Common myeloid progenitor, CD34-positive (primary cell): ENCODE measurements at regions of chr7 and their contacts with region 1.

Region 1: DNA sequence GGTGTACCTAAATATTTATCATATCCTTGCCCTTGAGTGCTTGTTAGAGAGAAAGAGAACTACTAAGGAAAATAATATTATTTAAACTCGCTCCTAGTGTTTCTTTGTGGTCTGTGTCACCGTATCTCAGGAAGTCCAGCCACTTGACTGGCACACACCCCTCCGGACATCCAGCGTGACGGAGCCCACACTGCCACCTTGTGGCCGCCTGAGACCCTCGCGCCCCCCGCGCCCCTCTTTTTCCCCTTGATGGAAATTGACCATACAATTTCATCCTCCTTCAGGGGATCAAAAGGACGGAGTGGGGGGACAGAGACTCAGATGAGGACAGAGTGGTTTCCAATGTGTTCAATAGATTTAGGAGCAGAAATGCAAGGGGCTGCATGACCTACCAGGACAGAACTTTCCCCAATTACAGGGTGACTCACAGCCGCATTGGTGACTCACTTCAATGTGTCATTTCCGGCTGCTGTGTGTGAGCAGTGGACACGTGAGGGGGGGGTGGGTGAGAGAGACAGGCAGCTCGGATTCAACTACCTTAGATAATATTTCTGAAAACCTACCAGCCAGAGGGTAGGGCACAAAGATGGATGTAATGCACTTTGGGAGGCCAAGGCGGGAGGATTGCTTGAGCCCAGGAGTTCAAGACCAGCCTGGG is 11.4 kb downstream of the SERPINE1 start:
- DNase-seq: peak; percentile 98 to 99 (median 99)
- H3K4me3 ChIP-seq: peak overlapping the region in 4 of 7 experiments; percentile 26 to 69 (median 55)
- H3K27ac ChIP-seq: peak overlapping the region; percentile 61 to 84
- H3K4me1 ChIP-seq: peaks cover 0 to 44% (median 21%) of the 10 kb centered on the region in 4 experiments
- H3K27me3 ChIP-seq: peaks cover 0 to 15% (median 2%) of the 10 kb centered on the region in 5 experiments

Region 2: GRCh38 chr7:101128040-101128794 is 10.1 kb before region 1 on chr7:
- CTCF ChIA-PET with region 1: interaction called, 10 read pairs
- POLR2A ChIA-PET with region 1: interaction called, 6 read pairs
- DNase-seq: no peak
- H3K4me3 ChIP-seq: peak overlapping the region in 2 of 7 experiments; percentile 15 to 80
- H3K27ac ChIP-seq: no peak overlapping the region
- H3K4me1 ChIP-seq: peaks cover 0 to 52% (median 39%) of the 10 kb centered on the region in 4 experiments
- H3K27me3 ChIP-seq: peaks cover 0 to 6% (median 1%) of the 10 kb centered on the region in 5 experiments

Region 3: GRCh38 chr7:101169838-101170551 is 31.7 kb after region 1 on chr7:
- CTCF ChIA-PET with region 1: interaction called, 19 read pairs
- POLR2A ChIA-PET with region 1: no interaction called
- DNase-seq: peak; percentile 69 to 87 (median 85)
- H3K4me3 ChIP-seq: no peak overlapping the region
- H3K27ac ChIP-seq: no peak overlapping the region
- H3K4me1 ChIP-seq: peaks cover 0 to 62% (median 47%) of the 10 kb centered on the region in 4 experiments
- H3K27me3 ChIP-seq: peaks cover 5 to 99% (median 63%) of the 10 kb centered on the region in 5 experiments

Region 4: GRCh38 chr7:101244375-101245146 is 106.2 kb after region 1 on chr7 and contains the start of gene FIS1:
- CTCF ChIA-PET with region 1: interaction called, 17 read pairs
- POLR2A ChIA-PET with region 1: no interaction called
- DNase-seq: peak; percentile 89 to 94 (median 92)
- H3K4me3 ChIP-seq: peak within 1 kb of the TSS; percentile 79 to 97 (median 92)
- H3K27ac ChIP-seq: peak within 1 kb of the TSS; percentile 79 to 90
- H3K4me1 ChIP-seq: peaks cover 0 to 52% (median 46%) of the 10 kb centered on the region in 4 experiments
- H3K27me3 ChIP-seq: no peaks in the 10 kb centered on the region